GM12878 (cell line): ENCODE measurements at regions of chr7 and their contacts with region 1.

Region 1: DNA sequence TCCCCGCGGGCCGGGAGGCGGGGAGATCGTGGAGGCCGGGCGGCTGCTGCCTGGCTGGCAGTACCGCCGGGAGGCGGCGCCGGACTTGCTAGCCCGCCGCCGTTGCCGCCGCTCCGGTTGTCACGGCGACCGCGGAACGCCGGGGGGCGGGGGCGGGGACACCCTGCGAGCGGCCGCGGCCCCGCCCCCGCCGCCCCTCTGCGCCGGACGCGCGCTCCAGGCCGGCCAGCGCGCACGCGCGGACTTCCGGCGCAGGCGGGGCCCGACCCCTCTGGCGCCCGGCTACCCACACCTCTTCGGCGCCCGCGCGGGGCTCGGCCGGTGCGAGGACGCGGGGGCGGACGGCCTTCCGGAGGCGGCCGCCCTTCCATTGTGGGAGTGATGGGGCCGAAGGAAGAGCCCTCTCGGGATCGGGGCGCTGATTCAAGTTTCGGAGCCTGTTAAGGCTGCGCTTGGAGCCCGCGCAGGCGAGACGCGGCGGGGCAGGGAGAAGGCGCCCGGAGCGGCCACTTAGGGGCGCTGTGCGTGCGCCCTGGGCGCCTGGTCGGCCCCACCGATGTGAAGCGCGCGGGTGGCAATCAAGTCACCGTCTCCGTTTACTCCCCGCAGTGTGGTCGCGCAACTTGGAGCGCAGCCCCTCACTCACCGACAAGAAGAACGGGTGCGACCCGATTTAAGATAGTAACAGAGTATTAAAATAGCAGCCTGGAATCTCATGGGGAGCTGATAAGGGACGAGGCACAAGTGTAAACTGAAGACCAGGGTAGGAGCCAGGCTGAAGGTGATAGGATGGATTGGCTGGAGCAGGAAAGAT is 448 bp upstream of the DPY19L1 start:
- DNase-seq: no peak
- ATAC-seq: peak; percentile 83
- H3K4me3 ChIP-seq: peak overlapping the region; percentile 87
- H3K27ac ChIP-seq: peak overlapping the region; percentile 18; the same call in 1 of the 2 replicates
- H3K4me1 ChIP-seq: peaks cover 10% of the 10 kb centered on the region
- H3K27me3 ChIP-seq: no peaks in the 10 kb centered on the region
- CTCF ChIP-seq: peak; percentile 76 to 78 (median 78)
- EP300 ChIP-seq: no peak
- POLR2A ChIP-seq: peak; percentile 56; the same call in 1 of the 2 replicates
- RAD21 ChIP-seq: peak; percentile 37

Region 2: DNA sequence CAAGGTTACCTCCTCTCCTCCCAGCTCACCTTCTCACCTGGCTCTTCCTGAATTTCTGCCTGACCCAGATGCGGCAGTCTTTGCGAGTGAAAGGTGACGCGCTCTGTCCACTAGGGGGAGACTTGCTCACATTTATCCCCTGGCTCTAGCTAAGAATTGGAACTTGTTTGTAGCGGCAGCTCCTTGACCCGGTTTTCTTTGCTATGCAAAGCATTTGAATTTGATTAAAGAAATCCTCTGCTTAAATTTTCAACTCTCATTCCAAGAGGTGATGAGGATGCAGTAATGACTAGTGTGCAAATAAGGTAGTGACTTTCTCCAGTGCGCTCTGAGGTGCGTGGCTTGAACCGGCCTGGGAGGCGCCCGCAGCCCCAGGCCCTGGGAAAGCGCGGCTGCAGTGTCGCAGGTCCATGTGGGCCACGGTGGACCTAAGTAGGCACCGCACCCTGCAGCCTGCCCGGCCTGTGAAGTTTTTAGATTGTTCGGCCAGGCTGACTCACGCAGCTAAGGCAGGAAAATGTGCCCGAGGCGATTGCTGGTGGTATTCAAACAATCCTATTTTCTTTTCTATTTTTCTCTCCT is 716.6 kb before region 1 on chr7:
- CTCF ChIA-PET with region 1: interaction called, 6 read pairs
- POLR2A ChIA-PET with region 1: no interaction called
- RAD21 ChIA-PET with region 1: interaction called, 5 read pairs
- SMC1A ChIA-PET with region 1: interaction called, 9 read pairs
- in situ Hi-C with region 1: no loop called
- intact Hi-C with region 1: loop called (anchors 10 kb)
- DNase-seq: peak; percentile 7
- ATAC-seq: peak; percentile 93
- H3K4me3 ChIP-seq: no peak overlapping the region
- H3K27ac ChIP-seq: no peak overlapping the region
- H3K4me1 ChIP-seq: no peaks in the 10 kb centered on the region
- H3K27me3 ChIP-seq: 0 out of 4 replicates have a peak, but pooled peaks cover 0 to 1% of the 10 kb centered on the region in 2 experiments
- CTCF ChIP-seq: peak; percentile 83 to 92 (median 89)
- EP300 ChIP-seq: no peak
- POLR2A ChIP-seq: no peak
- RAD21 ChIP-seq: peak; percentile 79

Region 3: GRCh38 chr7:34747867-34748727 is 289.6 kb before region 1 on chr7:
- CTCF ChIA-PET with region 1: interaction called, 19 read pairs
- POLR2A ChIA-PET with region 1: interaction called, 7 read pairs
- RAD21 ChIA-PET with region 1: interaction called, 11 read pairs
- SMC1A ChIA-PET with region 1: interaction called, 3 read pairs
- in situ Hi-C with region 1: no loop called
- intact Hi-C with region 1: no loop called
- DNase-seq: no peak
- ATAC-seq: peak; percentile 64
- H3K4me3 ChIP-seq: no peak overlapping the region
- H3K27ac ChIP-seq: no peak overlapping the region
- H3K4me1 ChIP-seq: no peaks in the 10 kb centered on the region
- H3K27me3 ChIP-seq: no peaks in the 10 kb centered on the region
- CTCF ChIP-seq: peak in 1 of 3 experiments; percentile 24; a peak in 2 of 6 replicates
- EP300 ChIP-seq: no peak
- POLR2A ChIP-seq: no peak
- RAD21 ChIP-seq: no peak

Region 4: DNA sequence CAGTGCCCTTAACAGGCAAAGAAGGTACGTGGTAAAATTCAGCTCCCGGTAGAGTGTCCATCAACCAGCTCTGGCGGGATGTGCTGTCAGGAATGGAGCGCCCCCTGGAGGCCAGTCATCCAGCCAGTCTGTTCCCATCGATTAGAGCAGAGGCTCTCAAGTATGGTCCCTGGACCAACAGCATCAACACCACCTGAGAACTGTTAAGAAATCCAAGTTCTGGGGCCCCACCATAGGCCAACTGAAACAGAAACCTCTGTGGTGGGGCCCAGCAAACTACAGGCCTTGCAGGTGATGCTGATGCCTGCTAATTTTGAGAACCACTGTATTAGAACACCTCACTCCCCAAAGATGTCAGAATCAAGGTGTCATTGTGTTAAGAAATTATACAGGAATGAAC is 109.7 kb before region 1 on chr7:
- CTCF ChIA-PET with region 1: interaction called, 11 read pairs
- POLR2A ChIA-PET with region 1: no interaction called
- RAD21 ChIA-PET with region 1: interaction called, 8 read pairs
- SMC1A ChIA-PET with region 1: interaction called, 9 read pairs
- in situ Hi-C with region 1: no loop called
- intact Hi-C with region 1: loop called (anchors 5 kb)
- DNase-seq: no peak
- ATAC-seq: peak; percentile 98
- H3K4me3 ChIP-seq: no peak overlapping the region
- H3K27ac ChIP-seq: no peak overlapping the region
- H3K4me1 ChIP-seq: no peaks in the 10 kb centered on the region
- H3K27me3 ChIP-seq: no peaks in the 10 kb centered on the region
- CTCF ChIP-seq: peak; percentile 59 to 64 (median 61)
- EP300 ChIP-seq: no peak
- POLR2A ChIP-seq: no peak
- RAD21 ChIP-seq: peak; percentile 44

Region 5: DNA sequence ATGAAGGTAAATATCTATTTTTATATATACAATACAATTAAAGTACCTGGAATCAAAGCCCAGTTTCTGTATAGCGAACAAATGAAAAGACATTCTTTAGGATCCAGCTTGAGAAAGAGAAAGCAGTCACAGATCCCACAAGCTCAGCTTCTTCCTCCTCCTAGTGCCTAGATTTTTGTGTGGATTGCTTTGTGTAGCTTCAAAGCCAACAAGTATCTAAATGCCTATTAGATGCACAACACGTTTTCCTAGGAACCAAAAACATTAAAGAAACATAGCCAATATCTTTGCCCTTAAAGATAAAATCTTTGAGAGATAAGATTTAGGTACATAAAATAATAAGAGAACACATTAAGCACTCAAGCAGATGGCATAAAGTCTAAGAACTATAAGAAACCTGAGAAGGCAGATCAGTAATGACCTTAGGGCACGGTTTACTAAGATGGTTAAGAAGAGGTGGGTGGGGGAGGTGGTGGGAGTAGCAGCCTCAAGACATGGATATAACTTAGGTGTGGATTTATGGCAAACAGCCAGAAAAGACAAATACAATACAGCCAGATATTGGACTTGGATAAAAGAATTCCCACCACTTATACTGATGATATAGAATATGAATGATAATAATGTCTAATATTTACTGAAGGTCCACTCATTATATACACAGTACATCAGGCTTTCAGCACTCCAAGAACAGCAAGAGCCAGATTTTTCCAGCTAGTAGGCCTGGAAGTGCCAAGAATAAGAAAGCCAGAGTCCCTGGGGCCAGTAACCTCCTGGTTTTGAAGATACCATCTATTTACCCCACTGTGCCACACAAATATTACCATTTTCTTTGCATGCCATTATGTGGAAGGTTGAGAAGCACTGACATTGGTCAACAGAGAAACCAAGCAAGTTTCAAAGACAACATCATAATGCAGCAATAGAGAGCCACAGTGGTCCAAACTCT is 12.4 kb before region 1 on chr7:
- CTCF ChIA-PET with region 1: interaction called, 4 read pairs
- POLR2A ChIA-PET with region 1: interaction called, 3 read pairs
- RAD21 ChIA-PET with region 1: interaction called, 12 read pairs
- SMC1A ChIA-PET with region 1: interaction called, 16 read pairs
- in situ Hi-C with region 1: no loop called
- intact Hi-C with region 1: no loop called
- DNase-seq: no peak
- ATAC-seq: no peak; the same call in 2 of the 3 replicates
- H3K4me3 ChIP-seq: no peak overlapping the region
- H3K27ac ChIP-seq: no peak overlapping the region
- H3K4me1 ChIP-seq: no peaks in the 10 kb centered on the region
- H3K27me3 ChIP-seq: no peaks in the 10 kb centered on the region
- CTCF ChIP-seq: no peak
- EP300 ChIP-seq: no peak
- POLR2A ChIP-seq: no peak
- RAD21 ChIP-seq: no peak

Region 6: DNA sequence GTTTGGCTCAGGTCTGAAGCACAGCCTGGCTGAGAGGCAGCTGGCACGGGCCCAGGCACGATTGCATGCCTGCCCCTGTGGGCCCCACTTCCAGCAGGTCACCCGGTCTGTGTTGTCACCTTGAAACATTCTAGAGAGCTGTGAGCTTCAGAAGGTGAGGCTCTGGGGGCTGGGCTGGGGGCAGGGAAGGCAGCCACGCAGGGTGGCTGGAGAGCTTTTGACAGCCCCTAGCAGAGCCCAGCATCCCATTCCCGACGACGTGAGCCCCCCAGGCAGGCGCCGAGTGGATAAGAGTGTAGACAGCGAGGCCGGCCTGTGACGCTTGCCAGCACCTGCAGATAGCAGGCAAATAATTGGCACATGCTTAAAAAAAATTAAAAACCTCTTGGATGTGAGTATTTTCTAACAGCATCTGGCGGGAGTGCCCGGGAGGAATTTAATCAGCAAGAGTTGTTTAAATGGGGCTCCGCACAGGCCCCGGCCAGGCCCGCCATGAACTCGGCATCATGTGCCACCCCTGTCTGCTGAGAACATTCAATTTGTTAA is 428.1 kb after region 1 on chr7:
- CTCF ChIA-PET with region 1: no interaction called
- POLR2A ChIA-PET with region 1: no interaction called
- RAD21 ChIA-PET with region 1: no interaction called
- SMC1A ChIA-PET with region 1: no interaction called
- in situ Hi-C with region 1: no loop called
- intact Hi-C with region 1: no loop called
- DNase-seq: no peak
- ATAC-seq: no peak
- H3K4me3 ChIP-seq: no peak overlapping the region
- H3K27ac ChIP-seq: no peak overlapping the region
- H3K4me1 ChIP-seq: no peaks in the 10 kb centered on the region
- H3K27me3 ChIP-seq: no peaks in the 10 kb centered on the region
- CTCF ChIP-seq: no peak
- EP300 ChIP-seq: no peak
- POLR2A ChIP-seq: no peak
- RAD21 ChIP-seq: no peak